Head of caudate nucleus (tissue), 42 donors: ENCODE measurements at regions of chr1 and their contacts with region 1.

Region 1: GRCh38 chr1:205325334-205325884 is 3.9 kb upstream of the NUAK2 start:
- DNase-seq: peak in 41 of 42 donors; percentile 23 to 93 (median 78)

Region 2: GRCh38 chr1:205273551-205273982 is 51.8 kb before region 1 on chr1:
- intact Hi-C with region 1: loop called (anchors 2 kb)
- DNase-seq: peak; percentile 64 to 97 (median 92)